CD8-positive, alpha-beta T cell (primary cell): ENCODE measurements at regions of chr3 and their contacts with region 1.

Region 1: DNA sequence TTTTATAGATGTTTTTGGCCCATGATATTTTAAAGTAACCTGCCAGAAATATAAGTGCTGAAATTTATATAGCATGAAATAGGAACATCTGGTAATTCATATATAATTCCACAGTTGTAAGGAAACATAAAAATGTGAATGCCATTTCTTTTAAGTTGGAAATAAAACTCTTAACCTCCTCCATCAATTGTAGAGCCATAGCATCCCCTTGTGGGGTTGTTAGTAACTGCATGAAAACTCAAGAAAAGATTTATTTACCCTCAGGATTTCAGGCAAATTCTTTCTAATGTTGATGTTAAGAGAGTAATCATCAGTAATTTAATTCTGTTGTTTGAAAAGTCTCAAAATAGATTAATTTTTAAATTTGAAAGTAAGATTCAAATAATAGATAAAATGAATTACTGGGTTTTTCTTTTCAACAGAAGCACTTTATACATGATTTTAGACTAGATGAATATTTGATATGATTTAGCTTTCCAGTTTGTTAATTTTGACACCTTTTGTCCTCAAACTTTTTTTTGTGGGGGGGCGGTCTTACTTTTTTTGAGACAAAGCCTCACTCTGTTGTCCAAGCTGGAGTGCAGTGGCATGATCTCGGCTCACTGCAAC is 74.7 kb downstream of the RASA2 start:
- DNase-seq: peak in 6 of 9 experiments; percentile 28 to 83 (median 46)
- ATAC-seq: peak; percentile 78
- H3K4me3 ChIP-seq: no peak overlapping the region
- H3K4me3 Mint-ChIP-seq: no peak overlapping the region
- H3K27ac ChIP-seq: no peak overlapping the region
- H3K27ac Mint-ChIP-seq: peak overlapping the region; percentile 66
- H3K4me1 ChIP-seq: peaks cover 46% of the 10 kb centered on the region
- H3K4me1 Mint-ChIP-seq: peaks cover 38% of the 10 kb centered on the region
- H3K27me3 ChIP-seq: no peaks in the 10 kb centered on the region
- H3K27me3 Mint-ChIP-seq: no peaks in the 10 kb centered on the region
- CTCF ChIP-seq: peak; percentile 100

Region 2: GRCh38 chr3:141370065-141370533 is 191.4 kb before region 1 on chr3:
- CTCF ChIA-PET with region 1: interaction called, 4 read pairs
- POLR2A ChIA-PET with region 1: no interaction called
- intact Hi-C with region 1: loop called in 1 of 2 experiments (anchors 2 kb)
- DNase-seq: peak; percentile 15 to 94 (median 54)
- ATAC-seq: peak; percentile 100
- H3K4me3 ChIP-seq: no peak overlapping the region
- H3K4me3 Mint-ChIP-seq: no peak overlapping the region
- H3K27ac ChIP-seq: no peak overlapping the region
- H3K27ac Mint-ChIP-seq: no peak overlapping the region
- H3K4me1 ChIP-seq: no peaks in the 10 kb centered on the region
- H3K4me1 Mint-ChIP-seq: peaks cover 9% of the 10 kb centered on the region
- H3K27me3 ChIP-seq: no peaks in the 10 kb centered on the region
- H3K27me3 Mint-ChIP-seq: no peaks in the 10 kb centered on the region
- CTCF ChIP-seq: peak; percentile 62

Region 3: DNA sequence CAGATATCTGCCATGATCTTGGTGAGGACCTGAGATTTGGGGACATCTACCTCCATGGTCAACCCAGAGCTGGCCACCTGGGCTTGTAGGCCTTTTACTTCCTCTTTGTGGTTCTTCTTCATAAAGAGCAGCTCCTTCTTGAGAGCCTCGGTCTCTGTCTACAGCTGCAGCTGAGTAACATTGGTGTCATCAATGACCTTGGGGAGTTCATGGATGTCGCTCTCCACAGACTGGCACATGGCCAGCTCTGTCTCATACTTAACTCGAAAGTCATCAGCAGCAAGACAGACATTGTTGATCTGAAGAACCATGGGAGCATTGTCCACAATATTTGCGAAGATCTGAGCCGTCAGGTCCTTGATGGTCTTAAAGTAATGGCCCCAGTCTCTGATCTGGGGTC is 90.4 kb before region 1 on chr3:
- CTCF ChIA-PET with region 1: interaction called, 116 read pairs
- POLR2A ChIA-PET with region 1: interaction called, 5 read pairs
- intact Hi-C with region 1: loop called (anchors 1 kb)
- DNase-seq: no peak
- ATAC-seq: no peak
- H3K4me3 ChIP-seq: no peak overlapping the region
- H3K4me3 Mint-ChIP-seq: no peak overlapping the region
- H3K27ac ChIP-seq: no peak overlapping the region
- H3K27ac Mint-ChIP-seq: no peak overlapping the region
- H3K4me1 ChIP-seq: peaks cover 18% of the 10 kb centered on the region
- H3K4me1 Mint-ChIP-seq: peaks cover 18% of the 10 kb centered on the region
- H3K27me3 ChIP-seq: no peaks in the 10 kb centered on the region
- H3K27me3 Mint-ChIP-seq: no peaks in the 10 kb centered on the region
- CTCF ChIP-seq: no peak

Region 4: GRCh38 chr3:141482250-141483017 is 79.1 kb before region 1 on chr3:
- CTCF ChIA-PET with region 1: interaction called, 30 read pairs
- POLR2A ChIA-PET with region 1: interaction called, 13 read pairs
- intact Hi-C with region 1: no loop called
- DNase-seq: no peak
- ATAC-seq: no peak
- H3K4me3 ChIP-seq: no peak overlapping the region
- H3K4me3 Mint-ChIP-seq: no peak overlapping the region
- H3K27ac ChIP-seq: no peak overlapping the region
- H3K27ac Mint-ChIP-seq: no peak overlapping the region
- H3K4me1 ChIP-seq: peaks cover 21% of the 10 kb centered on the region
- H3K4me1 Mint-ChIP-seq: peaks cover 39% of the 10 kb centered on the region
- H3K27me3 ChIP-seq: no peaks in the 10 kb centered on the region
- H3K27me3 Mint-ChIP-seq: no peaks in the 10 kb centered on the region
- CTCF ChIP-seq: no peak

Region 5: GRCh38 chr3:141544697-141545096 is 16.8 kb before region 1 on chr3:
- CTCF ChIA-PET with region 1: interaction called, 6 read pairs
- POLR2A ChIA-PET with region 1: no interaction called
- intact Hi-C with region 1: loop called in 1 of 2 experiments (anchors 2 kb)
- DNase-seq: peak in 2 of 9 experiments; percentile 61 to 79
- ATAC-seq: peak; percentile 88
- H3K4me3 ChIP-seq: no peak overlapping the region
- H3K4me3 Mint-ChIP-seq: peak overlapping the region; percentile 58
- H3K27ac ChIP-seq: peak overlapping the region in 1 of 2 experiments; percentile 65
- H3K27ac Mint-ChIP-seq: peak overlapping the region; percentile 90
- H3K4me1 ChIP-seq: peaks cover 15% of the 10 kb centered on the region
- H3K4me1 Mint-ChIP-seq: peaks cover 77% of the 10 kb centered on the region
- H3K27me3 ChIP-seq: no peaks in the 10 kb centered on the region
- H3K27me3 Mint-ChIP-seq: no peaks in the 10 kb centered on the region
- CTCF ChIP-seq: no peak

Region 6: GRCh38 chr3:141754032-141754431 is 192.5 kb after region 1 on chr3:
- CTCF ChIA-PET with region 1: no interaction called
- POLR2A ChIA-PET with region 1: no interaction called
- intact Hi-C with region 1: no loop called
- DNase-seq: no peak
- ATAC-seq: no peak
- H3K4me3 ChIP-seq: no peak overlapping the region
- H3K4me3 Mint-ChIP-seq: no peak overlapping the region
- H3K27ac ChIP-seq: peak overlapping the region in 1 of 2 experiments; percentile 10
- H3K27ac Mint-ChIP-seq: no peak overlapping the region
- H3K4me1 ChIP-seq: no peaks in the 10 kb centered on the region
- H3K4me1 Mint-ChIP-seq: peaks cover 1% of the 10 kb centered on the region
- H3K27me3 ChIP-seq: no peaks in the 10 kb centered on the region
- H3K27me3 Mint-ChIP-seq: no peaks in the 10 kb centered on the region
- CTCF ChIP-seq: no peak